K562 (cell line): ENCODE measurements at regions of chr7 and their contacts with region 1.

Region 1: GRCh38 chr7:151028131-151028947 is at the start of gene ABCB8:
- DNase-seq: peak; percentile 100
- ATAC-seq: peak; percentile 93
- H3K4me3 ChIP-seq: peak within 1 kb of the TSS; percentile 58
- H3K27ac ChIP-seq: peak within 1 kb of the TSS; percentile 73
- H3K4me1 ChIP-seq: peaks cover 35 to 56% of the 10 kb centered on the region in 2 experiments
- H3K27me3 ChIP-seq: no peaks in the 10 kb centered on the region
- CTCF ChIP-seq: peak; percentile 92 to 96 (median 93)
- EP300 ChIP-seq: peak; percentile 50; the same call in 1 of the 2 replicates
- POLR2A ChIP-seq: peak; percentile 88
- RAD21 ChIP-seq: peak; percentile 85 to 89
- polyA plus RNA-seq, gene ABCB8: 7.6 to 9.2 TPM

Region 2: DNA sequence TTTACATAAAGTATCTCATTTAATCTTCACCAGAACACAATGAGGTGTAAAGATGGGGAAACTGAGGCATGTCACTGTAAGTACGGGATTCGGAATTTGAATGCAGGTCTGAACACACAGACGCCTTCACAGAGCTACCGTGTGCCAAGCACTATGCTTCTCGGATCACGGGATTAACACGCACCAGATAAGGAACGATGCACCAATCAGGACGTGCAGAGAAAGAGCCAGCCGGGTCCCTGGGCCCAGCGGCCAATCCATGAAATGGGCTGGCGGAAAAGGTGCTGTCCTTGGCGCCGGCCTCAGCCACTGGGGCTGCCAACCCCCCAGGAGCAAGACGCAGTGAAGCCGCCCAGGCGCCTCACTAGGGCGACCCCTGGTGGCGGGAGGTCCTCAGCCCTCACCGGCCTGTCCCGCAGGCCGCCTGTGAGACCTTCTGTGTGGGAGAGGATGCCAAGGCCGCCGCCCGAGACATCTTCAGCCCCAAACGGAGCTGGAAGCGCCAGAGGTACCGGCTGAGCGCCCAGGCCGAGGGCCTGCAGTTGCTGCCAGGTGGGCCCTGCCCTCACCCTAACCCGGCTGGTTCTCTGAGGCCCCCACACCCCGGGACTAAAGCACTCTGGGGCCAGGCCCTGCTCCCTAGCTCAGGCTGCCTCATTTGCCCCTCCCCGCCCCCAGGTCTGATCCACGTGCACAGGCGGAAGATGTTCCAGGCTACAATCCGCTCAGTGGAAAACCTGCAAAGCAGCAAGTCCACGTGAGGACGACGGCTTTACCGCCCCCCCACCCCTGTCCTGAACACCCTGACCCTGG is 19.6 kb before region 1 on chr7:
- CTCF ChIA-PET with region 1: interaction called, 3 read pairs
- POLR2A ChIA-PET with region 1: interaction called, 146 read pairs
- in situ Hi-C with region 1: no loop called
- intact Hi-C with region 1: loop called (anchors 1 kb)
- DNase-seq: peak; percentile 97 to 99 (median 98)
- ATAC-seq: peak; percentile 87
- H3K4me3 ChIP-seq: peak overlapping the region; percentile 57
- H3K27ac ChIP-seq: peak overlapping the region; percentile 85
- H3K4me1 ChIP-seq: peaks cover 43 to 69% of the 10 kb centered on the region in 2 experiments
- H3K27me3 ChIP-seq: no peaks in the 10 kb centered on the region; a peak in 1 of 5 replicates
- CTCF ChIP-seq: peak; percentile 98 to 100 (median 99)
- EP300 ChIP-seq: peak; percentile 69
- POLR2A ChIP-seq: peak; percentile 83
- RAD21 ChIP-seq: peak; percentile 64 to 73

Region 3: GRCh38 chr7:151038951-151039849 is 10.9 kb after region 1 on chr7:
- CTCF ChIA-PET with region 1: no interaction called
- POLR2A ChIA-PET with region 1: interaction called, 21 read pairs
- in situ Hi-C with region 1: no loop called
- intact Hi-C with region 1: loop called (anchors 1 kb)
- DNase-seq: peak; percentile 99 to 100 (median 99)
- ATAC-seq: peak; percentile 97
- H3K4me3 ChIP-seq: no peak overlapping the region; the same call in 1 of the 2 replicates
- H3K27ac ChIP-seq: peak overlapping the region; percentile 65
- H3K4me1 ChIP-seq: peaks cover 24 to 73% of the 10 kb centered on the region in 2 experiments
- H3K27me3 ChIP-seq: no peaks in the 10 kb centered on the region
- CTCF ChIP-seq: peak in 1 of 3 experiments; percentile 7; a peak in 1 of 6 replicates
- EP300 ChIP-seq: peak; percentile 93
- POLR2A ChIP-seq: peak; percentile 56; the same call in 1 of the 2 replicates
- RAD21 ChIP-seq: peak in 1 of 2 experiments; percentile 28; a peak in 3 of 4 replicates

Region 4: GRCh38 chr7:151080522-151081169 is 52.3 kb after region 1 on chr7 and contains the start of gene FASTK:
- CTCF ChIA-PET with region 1: no interaction called
- POLR2A ChIA-PET with region 1: interaction called, 7 read pairs
- in situ Hi-C with region 1: no loop called
- intact Hi-C with region 1: loop called (anchors 1 kb)
- DNase-seq: peak; percentile 87 to 97 (median 92)
- ATAC-seq: peak; percentile 81
- H3K4me3 ChIP-seq: peak within 1 kb of the TSS; percentile 89
- H3K27ac ChIP-seq: peak within 1 kb of the TSS; percentile 94
- H3K4me1 ChIP-seq: peaks cover 48 to 88% of the 10 kb centered on the region in 2 experiments
- H3K27me3 ChIP-seq: no peaks in the 10 kb centered on the region
- CTCF ChIP-seq: no peak
- EP300 ChIP-seq: peak; percentile 22; the same call in 1 of the 2 replicates
- POLR2A ChIP-seq: peak; percentile 95
- RAD21 ChIP-seq: no peak
- polyA plus RNA-seq, gene FASTK: 0.51 to 2.7 TPM

Region 5: DNA sequence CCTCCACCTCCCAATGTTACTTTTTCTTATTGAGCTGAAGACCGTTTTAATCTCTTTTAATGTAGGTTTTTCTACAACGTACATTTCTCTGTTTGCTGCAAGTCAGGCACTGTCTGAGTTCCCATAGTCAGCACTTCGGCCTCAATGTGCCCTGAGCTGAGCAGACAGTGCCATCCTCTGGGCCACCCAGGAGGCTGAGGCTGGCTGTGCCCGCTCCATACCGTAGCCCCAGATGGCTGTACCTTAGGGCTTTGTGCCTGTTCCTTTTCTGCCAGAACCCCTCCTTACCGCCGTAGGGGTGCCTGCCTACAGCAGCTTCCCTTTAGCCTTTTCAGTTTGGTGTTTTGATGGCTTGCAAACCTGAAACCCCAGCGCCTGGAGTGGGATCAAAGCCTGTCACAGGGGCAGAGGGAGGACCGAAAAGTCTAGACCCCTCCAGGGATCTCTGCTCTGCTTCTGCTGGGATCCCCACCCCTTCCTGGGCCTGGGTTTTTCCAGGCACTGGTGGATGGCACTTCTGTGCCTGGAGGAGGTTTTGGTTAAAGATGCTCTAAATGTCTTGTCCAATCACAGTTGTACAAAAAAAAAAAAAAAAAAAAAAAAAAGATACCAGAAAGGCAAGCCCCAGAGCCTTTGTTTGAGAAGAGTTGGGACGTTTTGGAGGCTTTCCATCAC is 66.9 kb after region 1 on chr7:
- CTCF ChIA-PET with region 1: no interaction called
- POLR2A ChIA-PET with region 1: no interaction called
- in situ Hi-C with region 1: no loop called
- intact Hi-C with region 1: no loop called
- DNase-seq: no peak
- ATAC-seq: no peak
- H3K4me3 ChIP-seq: no peak overlapping the region
- H3K27ac ChIP-seq: no peak overlapping the region
- H3K4me1 ChIP-seq: peaks cover 2 to 28% of the 10 kb centered on the region in 2 experiments; a peak in 3 of 5 replicates
- H3K27me3 ChIP-seq: no peaks in the 10 kb centered on the region
- CTCF ChIP-seq: no peak
- EP300 ChIP-seq: no peak
- POLR2A ChIP-seq: no peak
- RAD21 ChIP-seq: no peak

Region 6: DNA sequence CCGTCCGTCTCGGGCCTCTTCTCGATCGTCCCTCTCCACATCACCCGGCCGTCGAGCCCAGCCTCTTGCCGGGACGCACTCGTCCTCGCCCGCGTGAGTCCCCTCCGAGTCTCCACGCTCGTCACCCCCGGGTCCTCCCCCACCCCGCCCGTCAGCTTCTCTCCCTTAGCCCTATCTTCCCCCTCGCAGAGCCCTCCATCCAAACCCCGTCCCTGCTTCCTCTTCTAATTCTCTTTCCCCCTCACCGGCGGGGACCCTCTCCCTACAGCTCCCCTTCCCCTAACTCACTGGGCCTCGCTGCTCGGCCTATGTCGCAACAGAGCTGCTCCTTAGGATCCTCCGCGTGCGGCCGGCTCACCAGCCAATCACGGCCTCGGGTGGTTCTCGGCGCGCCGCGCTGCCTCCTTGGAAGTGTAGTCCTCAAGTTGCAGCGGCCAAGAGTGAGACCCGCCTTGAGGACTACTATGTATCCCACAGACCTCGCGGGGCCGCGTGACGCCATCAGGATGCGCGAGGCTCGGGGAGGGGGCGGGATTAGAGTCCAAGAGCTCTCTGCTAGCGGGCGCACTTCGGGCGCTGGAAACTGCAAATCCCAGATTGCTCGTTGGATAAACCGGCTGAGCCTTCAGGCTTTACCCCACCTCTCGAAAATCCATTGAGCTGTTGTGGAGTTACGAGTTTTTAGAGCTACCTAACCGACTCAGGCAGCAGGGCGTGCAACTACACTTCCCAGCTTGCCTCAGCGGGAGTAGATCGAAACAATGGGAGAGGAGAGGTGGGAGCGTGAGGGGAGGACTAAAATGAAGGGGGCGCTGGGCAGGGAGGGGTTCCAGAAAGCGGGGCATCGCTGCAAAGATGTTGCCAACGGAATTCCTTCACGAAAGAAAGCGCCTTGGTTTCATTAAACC is 198.8 kb after region 1 on chr7 and contains the start of gene ABCF2:
- CTCF ChIA-PET with region 1: no interaction called
- POLR2A ChIA-PET with region 1: no interaction called
- in situ Hi-C with region 1: no loop called
- intact Hi-C with region 1: loop called (anchors 2 kb)
- DNase-seq: peak; percentile 99 to 100 (median 100)
- ATAC-seq: peak; percentile 99
- H3K4me3 ChIP-seq: peak within 1 kb of the TSS; percentile 82
- H3K27ac ChIP-seq: peak within 1 kb of the TSS; percentile 67
- H3K4me1 ChIP-seq: peaks cover 26 to 27% of the 10 kb centered on the region in 2 experiments; a peak in 4 of 5 replicates
- H3K27me3 ChIP-seq: no peaks in the 10 kb centered on the region
- CTCF ChIP-seq: peak in 1 of 3 experiments; percentile 15; a peak in 1 of 6 replicates
- EP300 ChIP-seq: peak; percentile 37
- POLR2A ChIP-seq: peak; percentile 91
- RAD21 ChIP-seq: no peak
- polyA plus RNA-seq, gene ABCF2: 103 to 224 TPM

Region 7: DNA sequence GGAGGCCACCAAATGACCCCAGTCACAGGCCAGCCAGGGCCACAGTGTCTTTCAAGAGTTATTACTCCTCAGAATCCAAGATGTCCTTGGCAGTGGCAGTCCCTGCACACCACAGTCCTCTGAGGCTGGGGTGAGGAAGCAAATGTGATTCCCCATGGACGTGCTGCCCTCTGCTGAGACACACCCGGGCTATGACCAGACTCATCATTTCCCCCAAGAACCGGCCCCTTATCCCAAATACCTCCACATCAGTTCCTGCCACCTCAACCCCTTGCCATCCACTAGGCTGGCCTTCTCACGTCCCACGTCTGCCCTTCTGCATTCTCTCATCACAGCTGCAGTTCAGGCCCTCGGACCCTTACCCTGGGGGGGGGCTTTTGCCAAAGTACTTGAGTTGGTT is 843.6 kb after region 1 on chr7:
- CTCF ChIA-PET with region 1: no interaction called
- POLR2A ChIA-PET with region 1: no interaction called
- in situ Hi-C with region 1: no loop called
- intact Hi-C with region 1: no loop called
- DNase-seq: peak in 1 of 4 experiments; percentile 27
- ATAC-seq: peak; percentile 47
- H3K4me3 ChIP-seq: no peak overlapping the region
- H3K27ac ChIP-seq: no peak overlapping the region
- H3K4me1 ChIP-seq: peaks cover 0 to 24% of the 10 kb centered on the region in 2 experiments; a peak in 3 of 5 replicates
- H3K27me3 ChIP-seq: peaks cover 52 to 80% of the 10 kb centered on the region in 2 experiments
- CTCF ChIP-seq: peak; percentile 28 to 38 (median 33); a peak in 4 of 6 replicates
- EP300 ChIP-seq: no peak
- POLR2A ChIP-seq: no peak
- RAD21 ChIP-seq: peak in 1 of 2 experiments; percentile 46; a peak in 2 of 4 replicates

Region 8: DNA sequence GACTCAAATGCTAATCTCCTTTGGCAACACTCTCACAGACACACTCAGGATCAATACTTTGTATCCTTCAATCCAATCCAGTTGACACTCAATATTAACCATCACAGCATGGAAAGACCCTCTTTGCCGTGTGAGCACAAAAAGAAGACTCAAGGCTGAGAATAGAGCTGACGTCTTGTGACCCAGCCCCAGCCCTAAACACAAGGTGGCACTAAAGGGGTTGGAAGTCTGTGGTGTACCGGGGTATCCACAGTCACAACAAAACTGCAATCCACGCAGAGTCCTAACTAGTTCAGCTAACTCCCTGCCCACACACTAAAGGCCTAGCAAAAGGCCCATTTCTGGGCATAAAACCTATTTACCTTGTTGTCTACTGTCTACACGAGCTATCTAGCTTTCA is 1931.3 kb after region 1 on chr7:
- CTCF ChIA-PET with region 1: no interaction called
- POLR2A ChIA-PET with region 1: no interaction called
- in situ Hi-C with region 1: no loop called
- intact Hi-C with region 1: no loop called
- DNase-seq: no peak
- ATAC-seq: peak; percentile 67
- H3K4me3 ChIP-seq: no peak overlapping the region
- H3K27ac ChIP-seq: no peak overlapping the region
- H3K4me1 ChIP-seq: no peaks in the 10 kb centered on the region
- H3K27me3 ChIP-seq: peaks cover 0 to 11% of the 10 kb centered on the region in 2 experiments; a peak in 1 of 5 replicates
- CTCF ChIP-seq: peak; percentile 6 to 10 (median 8); a peak in 1 of 6 replicates
- EP300 ChIP-seq: no peak
- POLR2A ChIP-seq: no peak
- RAD21 ChIP-seq: peak in 1 of 2 experiments; percentile 12; a peak in 1 of 4 replicates